GM12878 (cell line): ENCODE measurements at regions of chrX and their contacts with region 1.

Region 1: GRCh38 chrX:51860679-51861078 is 32.7 kb upstream of the MAGED1 start:
- DNase-seq: no peak
- ATAC-seq: peak; percentile 59
- H3K4me3 ChIP-seq: no peak overlapping the region
- H3K27ac ChIP-seq: no peak overlapping the region
- H3K4me1 ChIP-seq: no peaks in the 10 kb centered on the region
- H3K27me3 ChIP-seq: no peaks in the 10 kb centered on the region
- CTCF ChIP-seq: peak; percentile 38 to 64 (median 44); a peak in 4 of 6 replicates
- EP300 ChIP-seq: no peak
- POLR2A ChIP-seq: no peak
- RAD21 ChIP-seq: peak; percentile 65

Region 2: DNA sequence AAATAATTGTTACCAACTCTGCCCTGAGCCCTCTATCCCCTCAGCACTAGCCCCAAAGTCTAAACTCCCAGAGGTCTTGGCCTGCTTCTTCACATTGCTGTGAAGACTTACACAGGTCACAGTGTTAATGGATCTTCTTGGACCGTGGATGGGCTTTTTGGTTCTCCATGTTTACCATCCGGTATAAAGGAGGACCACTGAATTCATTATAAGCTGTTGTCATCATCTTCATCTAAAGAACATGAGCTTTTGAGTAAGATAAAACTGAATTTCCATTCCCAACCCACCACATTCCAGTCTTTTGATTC is 372.8 kb before region 1 on chrX:
- CTCF ChIA-PET with region 1: interaction called, 12 read pairs
- POLR2A ChIA-PET with region 1: no interaction called
- RAD21 ChIA-PET with region 1: no interaction called
- SMC1A ChIA-PET with region 1: no interaction called
- in situ Hi-C with region 1: no loop called
- intact Hi-C with region 1: loop called (anchors 5 kb)
- DNase-seq: no peak
- ATAC-seq: no peak; the same call in 2 of the 3 replicates
- H3K4me3 ChIP-seq: no peak overlapping the region
- H3K27ac ChIP-seq: no peak overlapping the region
- H3K4me1 ChIP-seq: no peaks in the 10 kb centered on the region
- H3K27me3 ChIP-seq: no peaks in the 10 kb centered on the region; a peak in 1 of 4 replicates
- CTCF ChIP-seq: no peak
- EP300 ChIP-seq: no peak
- POLR2A ChIP-seq: no peak
- RAD21 ChIP-seq: no peak

Region 3: DNA sequence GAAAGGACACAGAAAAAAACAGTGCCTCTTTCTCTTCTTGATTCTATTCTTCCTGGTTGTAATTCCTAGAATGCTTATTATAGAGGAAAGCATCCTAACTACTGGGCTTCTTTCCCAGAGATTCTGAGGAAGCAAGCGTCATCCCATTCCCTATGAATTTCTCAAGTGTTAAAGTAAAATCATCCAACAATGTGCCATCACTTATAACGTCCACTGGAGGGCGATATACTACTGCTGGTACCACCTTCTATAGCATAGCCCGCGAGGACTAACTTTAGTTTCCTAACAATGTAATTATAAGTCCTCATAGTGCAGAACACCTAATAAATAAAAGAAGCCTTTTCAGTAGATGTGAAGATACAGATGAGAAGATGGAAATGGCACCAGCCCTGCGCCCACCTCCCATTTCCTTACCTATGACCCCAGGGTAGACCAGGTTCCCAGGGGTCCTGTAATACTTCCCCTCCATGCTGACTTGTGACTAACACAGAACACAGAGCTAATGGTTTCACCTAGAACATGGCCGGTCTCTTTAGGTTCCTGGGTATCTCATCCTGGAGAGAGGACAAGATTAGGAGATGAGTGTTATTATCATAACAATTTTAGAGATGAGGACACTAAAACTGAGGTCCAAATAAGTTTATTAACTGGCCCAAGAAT is 246.2 kb before region 1 on chrX:
- CTCF ChIA-PET with region 1: interaction called, 5 read pairs
- POLR2A ChIA-PET with region 1: no interaction called
- RAD21 ChIA-PET with region 1: no interaction called
- SMC1A ChIA-PET with region 1: interaction called, 4 read pairs
- in situ Hi-C with region 1: no loop called
- intact Hi-C with region 1: loop called (anchors 1 kb)
- DNase-seq: no peak
- ATAC-seq: peak; percentile 66
- H3K4me3 ChIP-seq: no peak overlapping the region
- H3K27ac ChIP-seq: no peak overlapping the region
- H3K4me1 ChIP-seq: no peaks in the 10 kb centered on the region
- H3K27me3 ChIP-seq: no peaks in the 10 kb centered on the region
- CTCF ChIP-seq: peak; percentile 47 to 60 (median 60); a peak in 5 of 6 replicates
- EP300 ChIP-seq: no peak
- POLR2A ChIP-seq: no peak
- RAD21 ChIP-seq: peak; percentile 79

Region 4: DNA sequence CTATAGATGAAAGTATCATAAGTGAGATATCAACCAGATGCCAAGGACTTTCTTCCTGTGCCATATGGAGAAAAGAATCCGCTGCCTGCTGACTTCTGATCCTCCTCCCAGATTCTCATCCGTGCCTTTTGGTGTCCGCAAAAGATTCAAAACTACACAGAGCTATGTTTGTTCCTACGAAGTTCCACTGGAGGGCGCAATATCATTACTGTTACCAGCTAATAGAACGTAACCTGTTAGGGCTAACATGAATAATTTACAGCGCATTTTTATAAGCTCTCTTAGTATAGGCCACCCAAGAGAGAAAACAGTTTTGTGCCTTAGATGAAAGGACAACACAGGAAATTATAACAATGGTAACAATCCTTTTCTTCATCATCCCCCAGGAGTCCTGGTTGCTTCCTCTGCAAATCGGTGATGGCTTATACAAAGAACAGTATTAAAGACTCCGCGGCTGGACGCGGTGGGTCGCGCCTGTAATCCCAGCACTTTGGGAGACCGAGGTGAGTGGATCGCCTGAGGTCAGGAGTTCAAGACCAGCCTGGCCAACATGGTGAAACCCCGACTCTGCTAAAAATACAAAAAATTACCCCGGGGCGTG is 219.2 kb before region 1 on chrX:
- CTCF ChIA-PET with region 1: interaction called, 15 read pairs
- POLR2A ChIA-PET with region 1: no interaction called
- RAD21 ChIA-PET with region 1: interaction called, 9 read pairs
- SMC1A ChIA-PET with region 1: interaction called, 17 read pairs
- in situ Hi-C with region 1: no loop called
- intact Hi-C with region 1: no loop called
- DNase-seq: no peak
- ATAC-seq: peak; percentile 27; the same call in 1 of the 3 replicates
- H3K4me3 ChIP-seq: no peak overlapping the region
- H3K27ac ChIP-seq: no peak overlapping the region
- H3K4me1 ChIP-seq: no peaks in the 10 kb centered on the region
- H3K27me3 ChIP-seq: no peaks in the 10 kb centered on the region
- CTCF ChIP-seq: peak; percentile 24 to 38 (median 38); a peak in 5 of 6 replicates
- EP300 ChIP-seq: no peak
- POLR2A ChIP-seq: no peak
- RAD21 ChIP-seq: peak; percentile 70

Region 5: GRCh38 chrX:51694254-51694653 is 166.4 kb before region 1 on chrX:
- CTCF ChIA-PET with region 1: no interaction called
- POLR2A ChIA-PET with region 1: no interaction called
- RAD21 ChIA-PET with region 1: no interaction called
- SMC1A ChIA-PET with region 1: no interaction called
- in situ Hi-C with region 1: no loop called
- intact Hi-C with region 1: no loop called
- DNase-seq: no peak
- ATAC-seq: no peak
- H3K4me3 ChIP-seq: no peak overlapping the region
- H3K27ac ChIP-seq: no peak overlapping the region
- H3K4me1 ChIP-seq: no peaks in the 10 kb centered on the region
- H3K27me3 ChIP-seq: no peaks in the 10 kb centered on the region
- CTCF ChIP-seq: no peak
- EP300 ChIP-seq: no peak
- POLR2A ChIP-seq: no peak
- RAD21 ChIP-seq: no peak